Breast epithelium (tissue), 4 donors: ENCODE measurements at regions of chr4 and their contacts with region 1.

Region 1: GRCh38 chr4:180799798-180800197 is 1443.4 kb upstream of the TENM3 start:
- DNase-seq: no peak
- H3K4me3 ChIP-seq: no peak overlapping the region
- H3K27ac ChIP-seq: no peak overlapping the region
- H3K4me1 ChIP-seq: no peaks in the 10 kb centered on the region
- H3K27me3 ChIP-seq: no peaks in the 10 kb centered on the region
- CTCF ChIP-seq: no peak
- POLR2A ChIP-seq: no peak

Region 2: DNA sequence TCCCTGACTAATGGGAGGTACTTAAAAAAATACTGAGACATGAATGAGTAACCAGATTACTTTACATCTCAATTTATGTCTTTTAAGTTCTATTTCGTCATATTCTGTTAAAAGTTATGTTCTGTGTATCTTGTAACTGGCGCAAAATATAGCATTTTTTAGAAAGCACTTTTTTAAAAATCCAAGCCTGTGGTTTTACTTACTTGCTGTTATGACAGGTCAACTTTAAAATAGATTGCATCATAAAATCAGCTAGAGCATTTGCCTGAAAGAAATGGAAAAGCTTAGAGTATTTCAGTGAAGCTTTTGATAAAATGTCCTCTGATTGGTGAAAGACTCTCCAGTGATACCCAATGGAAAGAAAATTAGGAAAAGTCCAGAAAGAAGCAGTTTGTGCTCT is 448.9 kb before region 1 on chr4:
- intact Hi-C with region 1: loop called (anchors 5 kb)
- DNase-seq: no peak
- H3K4me3 ChIP-seq: no peak overlapping the region
- H3K27ac ChIP-seq: no peak overlapping the region
- H3K4me1 ChIP-seq: no peaks in the 10 kb centered on the region
- H3K27me3 ChIP-seq: no peaks in the 10 kb centered on the region
- CTCF ChIP-seq: no peak
- POLR2A ChIP-seq: no peak

Region 3: GRCh38 chr4:180407275-180407885 is 392.4 kb before region 1 on chr4:
- intact Hi-C with region 1: no loop called
- DNase-seq: no peak
- H3K4me3 ChIP-seq: no peak overlapping the region
- H3K27ac ChIP-seq: no peak overlapping the region
- H3K4me1 ChIP-seq: no peaks in the 10 kb centered on the region
- H3K27me3 ChIP-seq: no peaks in the 10 kb centered on the region
- CTCF ChIP-seq: no peak
- POLR2A ChIP-seq: no peak

Region 4: DNA sequence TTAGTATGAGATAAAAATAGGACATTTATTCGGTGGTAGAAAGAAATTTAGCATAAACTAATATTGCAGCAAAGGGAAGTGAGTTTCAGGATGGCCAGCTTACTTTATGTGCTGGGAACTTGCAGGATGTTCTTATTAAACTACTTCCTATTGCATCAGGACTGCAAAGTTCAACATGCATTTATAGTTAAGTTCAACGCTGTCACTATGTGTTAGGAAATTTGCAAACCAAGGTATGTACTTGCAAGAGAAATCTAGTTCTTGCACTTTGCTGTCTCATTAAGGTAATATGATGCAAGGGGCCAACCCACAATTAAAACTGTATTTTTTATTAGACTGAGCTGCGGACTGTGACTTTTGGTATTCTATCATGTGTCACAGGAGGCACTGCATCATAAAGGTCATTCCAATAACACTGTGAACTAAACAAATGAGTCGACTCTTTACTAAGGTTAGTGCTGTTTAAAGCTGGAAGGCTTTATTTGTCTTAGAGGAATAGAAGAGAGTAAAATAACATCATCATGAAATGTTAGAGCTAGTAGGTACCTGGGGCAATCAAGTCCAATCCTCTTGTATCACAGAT is 82.3 kb before region 1 on chr4:
- intact Hi-C with region 1: no loop called
- DNase-seq: no peak
- H3K4me3 ChIP-seq: no peak overlapping the region
- H3K27ac ChIP-seq: no peak overlapping the region
- H3K4me1 ChIP-seq: no peaks in the 10 kb centered on the region
- H3K27me3 ChIP-seq: no peaks in the 10 kb centered on the region
- CTCF ChIP-seq: no peak
- POLR2A ChIP-seq: no peak

Region 5: DNA sequence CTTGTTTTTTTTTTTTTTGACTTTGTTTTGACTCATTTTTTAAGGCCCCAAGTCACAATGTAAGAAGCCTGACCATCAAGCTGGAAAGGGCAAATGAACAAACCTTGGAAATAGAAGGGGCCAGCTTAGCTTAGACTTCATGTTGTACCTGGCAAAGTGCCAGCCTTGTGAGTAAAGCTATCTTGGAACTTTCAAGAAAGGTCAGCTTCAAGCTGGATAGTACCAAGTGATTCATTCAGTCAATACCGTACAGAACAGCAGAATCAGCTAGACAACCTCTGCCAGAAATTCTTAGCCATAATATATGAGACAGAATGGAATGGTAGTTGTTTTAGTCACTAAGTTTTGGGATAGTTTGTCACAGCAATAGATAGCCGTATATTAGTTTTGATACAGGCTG is 48.8 kb before region 1 on chr4:
- intact Hi-C with region 1: no loop called
- DNase-seq: no peak
- H3K4me3 ChIP-seq: no peak overlapping the region
- H3K27ac ChIP-seq: no peak overlapping the region
- H3K4me1 ChIP-seq: no peaks in the 10 kb centered on the region
- H3K27me3 ChIP-seq: no peaks in the 10 kb centered on the region
- CTCF ChIP-seq: no peak
- POLR2A ChIP-seq: no peak